ENCODE measurements at regions of chrX and their contacts with region 1.

Region 1: DNA sequence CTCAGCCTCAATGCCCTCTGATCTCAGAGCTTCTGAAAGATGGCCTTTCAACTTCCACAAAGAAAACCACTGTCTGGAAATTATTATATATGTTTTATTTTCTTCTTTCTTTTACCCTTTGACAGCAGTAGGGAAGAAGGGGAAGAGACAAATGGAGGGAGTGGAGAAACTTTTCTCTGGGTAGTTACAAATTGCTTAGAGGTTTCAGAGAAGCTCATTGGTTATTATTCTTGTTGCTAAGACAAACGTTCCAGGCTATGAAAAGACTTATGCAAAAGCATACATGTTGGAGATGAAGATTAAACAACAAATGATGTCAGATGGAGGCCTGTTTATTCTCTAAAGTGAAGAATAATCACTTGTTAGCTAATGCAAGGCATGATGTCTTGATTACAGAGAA is 57.4 kb downstream of the VSIG4 start:
- DNase-seq: no peak
- ATAC-seq: no peak
- H3K4me3 ChIP-seq: no peak overlapping the region
- H3K27ac ChIP-seq: no peak overlapping the region
- H3K4me1 ChIP-seq: no peaks in the 10 kb centered on the region
- H3K27me3 ChIP-seq: peaks cover 0 to 18% (median 0%) of the 10 kb centered on the region in 4 donors
- CTCF ChIP-seq: no peak

Region 2: DNA sequence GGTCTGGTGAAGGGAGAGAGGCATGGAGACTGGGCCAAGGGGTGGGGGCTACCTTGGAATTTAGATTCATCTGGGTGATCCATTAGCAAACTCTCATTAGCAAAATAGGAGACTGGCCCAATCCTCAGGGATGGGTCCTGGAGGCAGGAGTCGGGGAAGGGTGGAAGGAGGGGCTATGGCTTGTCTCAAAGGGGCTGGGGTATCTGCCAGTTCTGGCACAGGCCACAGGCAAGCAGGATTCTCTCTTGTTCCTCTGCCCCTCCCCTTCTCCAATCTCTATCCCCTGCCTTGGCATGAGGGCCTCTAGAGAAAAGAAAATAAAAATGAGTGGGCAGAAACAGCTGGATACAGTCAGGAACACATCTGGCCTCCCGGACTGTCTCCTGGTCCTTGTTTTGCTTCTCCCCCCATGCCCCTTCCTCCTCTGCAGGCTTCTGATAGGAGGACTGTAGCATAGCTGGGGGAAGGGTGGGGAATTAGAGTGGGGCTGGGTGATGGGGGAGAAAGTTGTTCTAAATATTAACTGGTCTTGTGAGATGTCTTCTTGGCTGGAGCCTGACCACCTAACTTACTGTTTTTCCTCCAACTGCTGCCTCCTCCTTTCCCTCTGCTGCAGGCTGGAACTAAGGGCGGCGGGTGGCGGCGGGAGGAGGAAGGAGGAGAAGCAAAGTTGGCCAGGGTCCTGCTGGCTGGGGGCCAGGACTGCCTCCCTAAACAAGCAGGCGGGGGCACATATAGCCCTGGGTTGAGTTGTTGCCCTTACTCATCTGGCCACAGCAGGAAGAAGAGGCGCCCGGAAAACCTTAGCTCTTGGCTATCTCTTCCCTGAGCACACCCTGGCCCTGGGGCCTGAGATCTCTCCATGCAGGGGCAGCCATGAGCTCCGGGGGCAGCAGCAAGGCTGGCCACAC is 394.6 kb before region 1 on chrX:
- intact Hi-C with region 1: loop called in 1 of 3 experiments (anchors 5 kb)
- DNase-seq: peak in 5 of 6 donors; percentile 10 to 76 (median 42)
- ATAC-seq: peak in 3 of 4 donors; percentile 53 to 78 (median 63)
- H3K4me3 ChIP-seq: no peak overlapping the region
- H3K27ac ChIP-seq: no peak overlapping the region
- H3K4me1 ChIP-seq: no peaks in the 10 kb centered on the region
- H3K27me3 ChIP-seq: peaks cover 0 to 10% (median 1%) of the 10 kb centered on the region in 4 donors
- CTCF ChIP-seq: no peak

Region 3: GRCh38 chrX:66064261-66064660 is 81.8 kb after region 1 on chrX:
- intact Hi-C with region 1: no loop called
- DNase-seq: peak in 1 of 6 donors; percentile 19
- ATAC-seq: no peak
- H3K4me3 ChIP-seq: no peak overlapping the region
- H3K27ac ChIP-seq: no peak overlapping the region
- H3K4me1 ChIP-seq: no peaks in the 10 kb centered on the region
- H3K27me3 ChIP-seq: peaks cover 0 to 14% (median 3%) of the 10 kb centered on the region in 4 donors
- CTCF ChIP-seq: no peak

Measured in pancreas (tissue), 10 donors.